IMR-90 (cell line): ENCODE measurements at regions of chr3 and their contacts with region 1.

Region 1: GRCh38 chr3:183766745-183767606 is 58.4 kb downstream of the MAP6D1 start:
- DNase-seq: peak; percentile 67
- ATAC-seq: peak; percentile 87
- H3K4me3 ChIP-seq: no peak overlapping the region
- H3K27ac ChIP-seq: no peak overlapping the region
- H3K4me1 ChIP-seq: peaks cover 4% of the 10 kb centered on the region; the same call in 1 of the 2 replicates
- H3K27me3 ChIP-seq: no peaks in the 10 kb centered on the region
- CTCF ChIP-seq: peak; percentile 67
- POLR2A ChIP-seq: no peak
- RAD21 ChIP-seq: peak; percentile 84

Region 2: GRCh38 chr3:183122257-183122932 is 644.6 kb before region 1 on chr3:
- CTCF ChIA-PET with region 1: no interaction called
- POLR2A ChIA-PET with region 1: no interaction called
- dilution Hi-C with region 1: no loop called
- in situ Hi-C with region 1: no loop called
- intact Hi-C with region 1: loop called (anchors 1 kb)
- DNase-seq: peak; percentile 74
- ATAC-seq: peak; percentile 78
- H3K4me3 ChIP-seq: no peak overlapping the region
- H3K27ac ChIP-seq: no peak overlapping the region
- H3K4me1 ChIP-seq: 0 out of 2 replicates have a peak, but pooled peaks cover 2% of the 10 kb centered on the region
- H3K27me3 ChIP-seq: peaks cover 12% of the 10 kb centered on the region
- CTCF ChIP-seq: peak; percentile 93
- POLR2A ChIP-seq: no peak
- RAD21 ChIP-seq: peak; percentile 87

Region 3: DNA sequence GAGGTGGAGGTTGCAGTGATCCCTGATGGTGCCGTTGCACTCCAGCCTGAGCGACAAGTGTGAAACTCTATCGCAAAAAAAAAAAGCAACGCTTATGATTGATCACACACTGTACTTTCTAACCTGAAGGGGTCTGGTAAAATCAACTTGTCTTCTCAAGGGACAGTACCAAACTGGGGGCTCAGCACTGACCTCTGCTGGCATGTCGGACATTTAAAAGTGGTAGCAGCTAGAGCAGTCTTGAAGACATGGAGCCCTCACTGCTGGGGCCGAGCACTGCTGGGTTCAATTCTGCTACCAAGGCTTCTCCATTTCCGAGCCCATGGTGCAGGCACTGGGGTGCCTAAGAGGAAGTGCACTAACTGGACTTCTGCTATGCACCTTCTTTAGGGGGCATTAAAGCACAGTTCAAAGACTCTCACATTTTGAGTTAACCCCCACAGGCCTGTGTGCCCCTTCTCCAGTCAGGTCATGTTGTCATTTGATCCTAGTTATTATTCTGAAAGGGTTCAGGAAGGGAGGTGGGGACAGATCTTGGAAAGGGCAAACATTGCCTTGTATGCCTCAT is 578.0 kb before region 1 on chr3:
- CTCF ChIA-PET with region 1: no interaction called
- POLR2A ChIA-PET with region 1: no interaction called
- dilution Hi-C with region 1: no loop called
- in situ Hi-C with region 1: no loop called
- intact Hi-C with region 1: loop called (anchors 10 kb)
- DNase-seq: no peak
- ATAC-seq: no peak
- H3K4me3 ChIP-seq: no peak overlapping the region
- H3K27ac ChIP-seq: no peak overlapping the region
- H3K4me1 ChIP-seq: peaks cover 10% of the 10 kb centered on the region
- H3K27me3 ChIP-seq: no peaks in the 10 kb centered on the region; the same call in 1 of the 2 replicates
- CTCF ChIP-seq: peak; percentile 35
- POLR2A ChIP-seq: no peak
- RAD21 ChIP-seq: no peak

Region 4: DNA sequence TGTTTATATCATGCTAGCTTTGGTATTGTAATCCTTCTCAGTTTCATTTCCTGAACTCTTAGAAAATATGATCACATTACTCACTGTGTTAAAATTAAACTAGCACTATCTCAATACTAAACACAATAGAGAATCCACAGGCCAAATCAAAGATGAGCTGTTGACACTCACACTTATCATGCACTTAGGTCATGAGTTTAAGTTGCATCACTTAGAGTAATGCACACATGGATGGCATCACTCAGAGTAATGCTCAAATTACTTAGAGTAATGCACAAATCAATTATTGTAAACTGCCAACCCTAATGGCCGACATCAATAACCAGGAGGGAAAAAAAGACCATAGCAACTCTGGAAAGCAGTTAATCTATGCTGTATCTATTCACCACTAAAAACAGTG is 298.6 kb before region 1 on chr3:
- CTCF ChIA-PET with region 1: interaction called, 5 read pairs
- POLR2A ChIA-PET with region 1: no interaction called
- dilution Hi-C with region 1: no loop called
- in situ Hi-C with region 1: loop called (anchors 5 kb)
- intact Hi-C with region 1: loop called (anchors 1 kb)
- DNase-seq: no peak
- ATAC-seq: no peak
- H3K4me3 ChIP-seq: no peak overlapping the region
- H3K27ac ChIP-seq: no peak overlapping the region
- H3K4me1 ChIP-seq: no peaks in the 10 kb centered on the region
- H3K27me3 ChIP-seq: peaks cover 3% of the 10 kb centered on the region
- CTCF ChIP-seq: no peak
- POLR2A ChIP-seq: no peak
- RAD21 ChIP-seq: no peak

Region 5: DNA sequence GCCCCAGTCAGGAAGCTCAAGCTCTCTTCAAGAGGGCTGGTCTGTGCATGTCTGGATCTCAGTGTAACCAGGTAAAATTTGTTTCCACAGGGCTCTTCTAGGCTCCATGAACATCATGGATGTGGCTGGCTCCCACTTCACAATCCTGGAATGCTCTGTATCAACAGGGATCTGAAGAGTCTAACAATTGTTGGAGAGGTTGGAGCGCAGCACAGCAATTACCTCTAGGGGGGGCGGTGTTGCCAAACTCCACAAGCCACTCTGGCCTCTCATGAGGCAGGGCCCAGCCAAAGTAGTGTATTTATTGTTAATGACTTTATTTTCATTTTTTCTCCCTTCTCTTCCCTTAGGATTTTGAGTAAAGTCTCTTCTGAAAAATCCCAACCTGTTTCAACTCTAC is 362.0 kb after region 1 on chr3:
- CTCF ChIA-PET with region 1: no interaction called
- POLR2A ChIA-PET with region 1: no interaction called
- dilution Hi-C with region 1: no loop called
- in situ Hi-C with region 1: no loop called
- intact Hi-C with region 1: no loop called
- DNase-seq: peak; percentile 58
- ATAC-seq: peak; percentile 90
- H3K4me3 ChIP-seq: no peak overlapping the region
- H3K27ac ChIP-seq: no peak overlapping the region
- H3K4me1 ChIP-seq: no peaks in the 10 kb centered on the region; the same call in 1 of the 2 replicates
- H3K27me3 ChIP-seq: no peaks in the 10 kb centered on the region
- CTCF ChIP-seq: peak; percentile 52
- POLR2A ChIP-seq: no peak
- RAD21 ChIP-seq: peak; percentile 52

Region 6: GRCh38 chr3:185381320-185382058 is 1614.5 kb after region 1 on chr3:
- CTCF ChIA-PET with region 1: no interaction called
- POLR2A ChIA-PET with region 1: no interaction called
- dilution Hi-C with region 1: no loop called
- in situ Hi-C with region 1: no loop called
- intact Hi-C with region 1: no loop called
- DNase-seq: no peak
- ATAC-seq: no peak; the same call in 1 of the 2 replicates
- H3K4me3 ChIP-seq: no peak overlapping the region
- H3K27ac ChIP-seq: no peak overlapping the region
- H3K4me1 ChIP-seq: no peaks in the 10 kb centered on the region
- H3K27me3 ChIP-seq: no peaks in the 10 kb centered on the region
- CTCF ChIP-seq: no peak
- POLR2A ChIP-seq: no peak
- RAD21 ChIP-seq: no peak